OCI-LY7 (cell line): ENCODE measurements at regions of chr12 and their contacts with region 1.

Region 1: DNA sequence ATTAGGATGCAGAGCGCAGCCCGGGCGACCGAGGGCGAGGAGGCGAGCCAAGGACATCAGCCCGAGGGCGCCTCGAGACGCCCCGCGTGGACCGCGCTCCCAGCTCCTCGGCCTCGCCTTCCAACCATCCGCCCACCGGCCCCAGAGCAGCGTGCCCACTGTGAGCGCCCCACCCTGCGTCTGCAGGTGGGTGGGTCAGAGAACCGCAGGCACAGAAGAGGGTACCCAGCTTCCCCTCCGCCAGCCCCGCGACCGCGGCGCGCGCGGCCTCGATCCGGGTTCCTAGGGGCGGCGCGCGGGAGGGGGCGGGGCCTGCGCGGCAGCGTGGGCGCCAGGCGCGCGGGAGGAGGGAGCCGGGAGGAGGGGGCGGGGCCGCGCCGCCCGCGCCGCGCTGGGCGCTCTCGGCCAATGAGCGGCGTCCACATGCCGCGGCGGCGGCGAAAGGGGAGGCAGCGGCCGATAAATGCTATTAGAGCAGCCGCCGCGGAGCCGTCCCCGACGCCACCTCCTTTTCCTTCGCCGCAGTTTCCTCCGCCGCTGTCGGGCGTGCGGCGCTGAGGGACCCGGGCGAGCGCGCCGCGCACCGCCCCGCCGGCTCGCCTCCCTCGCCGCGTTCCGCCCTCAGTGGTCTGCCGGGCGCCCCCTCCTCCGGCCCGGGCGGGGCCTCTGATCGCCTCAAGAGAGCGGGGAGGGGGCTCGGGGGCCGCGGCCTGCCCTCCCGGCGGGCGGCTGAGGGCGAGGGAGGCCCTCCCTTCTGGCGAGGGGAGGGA is at the start of gene ATP2A2:
- DNase-seq: peak; percentile 95
- H3K4me3 ChIP-seq: peak within 1 kb of the TSS; percentile 86
- H3K27ac ChIP-seq: peak within 1 kb of the TSS; percentile 74
- H3K4me1 ChIP-seq: peaks cover 48% of the 10 kb centered on the region
- CTCF ChIP-seq: no peak
- total RNA-seq, gene ATP2A2: 84.1 and 93.5 TPM in 2 replicates

Region 2: DNA sequence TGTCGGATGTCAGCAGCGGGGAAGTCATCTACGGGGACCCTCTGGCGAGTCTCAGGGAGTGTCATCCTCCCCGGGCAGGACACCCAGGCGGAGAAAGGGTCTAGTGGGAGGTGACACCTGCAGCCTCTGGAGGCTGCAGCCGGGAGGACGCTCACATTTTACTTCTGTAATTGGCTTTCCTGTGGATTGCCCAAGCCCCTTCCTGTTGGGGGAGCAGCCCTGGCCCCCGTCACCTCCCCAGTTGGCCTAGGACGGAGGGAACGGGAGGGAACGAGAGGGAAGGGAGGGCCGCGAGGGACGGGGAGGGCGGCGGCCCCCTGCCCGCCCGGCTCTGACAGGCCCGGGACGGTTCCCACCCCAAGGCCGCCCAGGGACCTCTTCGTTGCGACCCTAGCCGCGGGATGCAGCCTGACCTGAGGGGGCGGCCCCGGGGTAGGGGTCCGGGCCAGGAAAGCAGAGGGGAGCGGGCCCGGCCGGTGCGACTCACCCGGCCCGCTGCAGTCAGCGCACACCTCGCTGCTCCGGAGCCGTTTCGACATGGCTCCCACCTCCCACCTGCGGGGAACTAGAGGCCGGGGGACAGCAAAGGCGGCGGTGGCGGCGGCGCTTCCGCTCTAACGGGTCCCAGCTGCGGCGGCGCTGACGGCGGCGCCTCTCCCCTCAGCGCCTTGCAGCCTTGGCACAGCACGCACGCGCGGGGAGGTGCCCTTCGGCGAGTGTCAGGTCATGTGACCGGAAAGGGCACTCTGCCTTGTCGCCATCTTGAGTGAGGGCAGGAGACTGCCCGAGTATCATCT is 285.1 kb before region 1 on chr12 and contains the start of gene GIT2:
- CTCF ChIA-PET with region 1: no interaction called
- POLR2A ChIA-PET with region 1: interaction called, 3 read pairs
- intact Hi-C with region 1: loop called (anchors 2 kb)
- DNase-seq: peak; percentile 99
- H3K4me3 ChIP-seq: peak within 1 kb of the TSS; percentile 96
- H3K27ac ChIP-seq: peak within 1 kb of the TSS; percentile 92
- H3K4me1 ChIP-seq: peaks cover 37% of the 10 kb centered on the region
- CTCF ChIP-seq: peak; percentile 35; the same call in 1 of the 2 replicates
- total RNA-seq, gene GIT2: 57.1 and 60.6 TPM in 2 replicates

Region 3: DNA sequence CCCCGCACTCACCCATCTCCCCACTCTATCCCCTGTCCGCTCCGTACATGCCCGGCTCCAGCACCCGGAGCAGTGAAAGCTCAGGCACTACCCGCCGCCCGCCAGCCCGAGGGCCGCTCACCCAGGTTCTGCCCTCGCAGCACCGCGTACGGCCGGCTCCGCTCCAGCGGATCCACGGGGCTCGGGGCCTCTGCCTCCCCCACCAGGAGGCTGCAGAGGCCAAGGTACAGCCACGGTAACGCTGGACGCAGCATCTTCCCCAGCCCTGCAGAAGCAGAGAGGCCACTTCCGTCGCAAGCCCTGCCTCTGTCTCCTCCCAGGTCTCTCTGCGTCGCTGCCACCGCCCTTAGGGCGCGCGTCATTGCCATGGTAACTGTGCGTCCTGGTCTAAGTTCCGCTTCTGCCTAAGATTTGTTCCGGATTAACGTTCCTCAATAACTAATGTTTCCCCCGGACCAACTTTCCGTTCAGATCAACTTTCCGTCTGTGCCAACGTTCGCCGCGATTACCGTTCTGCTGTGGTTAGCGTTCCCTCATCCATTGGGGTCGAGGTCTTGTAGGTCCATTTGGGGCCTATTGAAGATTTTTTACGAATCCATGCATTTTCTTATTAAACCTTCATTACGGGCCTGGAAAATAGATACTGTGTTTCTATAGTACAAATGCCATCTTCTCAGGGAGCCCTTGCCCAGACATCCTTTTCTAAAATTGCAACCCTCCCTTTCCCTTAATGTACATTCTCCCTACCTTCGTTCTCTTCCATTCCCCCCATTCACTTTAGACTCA is 232.5 kb before region 1 on chr12 and contains the start of gene C12orf76:
- CTCF ChIA-PET with region 1: no interaction called
- POLR2A ChIA-PET with region 1: no interaction called
- intact Hi-C with region 1: loop called (anchors 1 kb)
- DNase-seq: peak; percentile 97
- H3K4me3 ChIP-seq: peak within 1 kb of the TSS; percentile 90
- H3K27ac ChIP-seq: peak within 1 kb of the TSS; percentile 98
- H3K4me1 ChIP-seq: peaks cover 53% of the 10 kb centered on the region
- CTCF ChIP-seq: no peak
- total RNA-seq, gene C12orf76: 17.0 and 24.4 TPM in 2 replicates

Region 4: DNA sequence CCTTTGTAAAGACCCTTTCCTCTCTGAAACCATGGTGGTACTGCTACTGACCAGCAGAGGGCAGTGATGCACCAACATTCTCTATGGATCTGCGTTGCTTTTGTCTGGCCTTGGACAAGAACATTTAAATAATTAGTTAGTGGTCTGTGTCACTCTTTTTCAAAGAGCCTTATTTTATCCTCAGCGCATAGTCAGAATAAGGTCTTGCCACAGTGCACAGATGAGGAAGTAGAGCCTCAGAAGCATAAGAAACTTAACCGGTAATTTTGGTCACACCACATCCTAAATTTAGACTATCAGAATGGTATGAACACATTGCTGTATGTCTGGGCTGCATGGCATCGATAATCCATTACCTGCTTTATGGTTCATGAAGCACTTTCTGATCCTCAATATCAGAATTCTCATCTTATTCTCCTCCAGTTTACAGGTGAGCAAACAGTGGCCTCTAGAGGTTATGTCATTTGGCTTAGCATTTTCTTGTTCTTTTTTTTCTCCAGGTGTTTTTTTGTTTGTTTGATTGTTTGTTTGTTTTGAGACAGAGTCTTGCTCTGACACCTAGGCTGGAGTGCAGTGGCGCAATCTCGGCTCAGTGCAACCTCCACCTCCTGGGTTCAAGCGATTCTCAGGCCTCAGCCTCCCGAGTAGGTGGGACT is 180.5 kb before region 1 on chr12:
- CTCF ChIA-PET with region 1: interaction called, 3 read pairs
- POLR2A ChIA-PET with region 1: interaction called, 3 read pairs
- intact Hi-C with region 1: loop called (anchors 2 kb)
- DNase-seq: peak; percentile 87
- H3K4me3 ChIP-seq: peak overlapping the region; percentile 48
- H3K27ac ChIP-seq: peak overlapping the region; percentile 78
- H3K4me1 ChIP-seq: peaks cover 22% of the 10 kb centered on the region
- CTCF ChIP-seq: peak; percentile 97

Region 5: GRCh38 chr12:110124184-110124995 is 156.6 kb before region 1 on chr12 and contains the start of gene IFT81:
- CTCF ChIA-PET with region 1: no interaction called
- POLR2A ChIA-PET with region 1: interaction called, 4 read pairs
- intact Hi-C with region 1: loop called (anchors 2 kb)
- DNase-seq: peak; percentile 94
- H3K4me3 ChIP-seq: peak within 1 kb of the TSS; percentile 94
- H3K27ac ChIP-seq: peak within 1 kb of the TSS; percentile 19
- H3K4me1 ChIP-seq: peaks cover 14% of the 10 kb centered on the region
- CTCF ChIP-seq: no peak
- total RNA-seq, gene IFT81: 5.6 and 7.2 TPM in 2 replicates

Region 6: DNA sequence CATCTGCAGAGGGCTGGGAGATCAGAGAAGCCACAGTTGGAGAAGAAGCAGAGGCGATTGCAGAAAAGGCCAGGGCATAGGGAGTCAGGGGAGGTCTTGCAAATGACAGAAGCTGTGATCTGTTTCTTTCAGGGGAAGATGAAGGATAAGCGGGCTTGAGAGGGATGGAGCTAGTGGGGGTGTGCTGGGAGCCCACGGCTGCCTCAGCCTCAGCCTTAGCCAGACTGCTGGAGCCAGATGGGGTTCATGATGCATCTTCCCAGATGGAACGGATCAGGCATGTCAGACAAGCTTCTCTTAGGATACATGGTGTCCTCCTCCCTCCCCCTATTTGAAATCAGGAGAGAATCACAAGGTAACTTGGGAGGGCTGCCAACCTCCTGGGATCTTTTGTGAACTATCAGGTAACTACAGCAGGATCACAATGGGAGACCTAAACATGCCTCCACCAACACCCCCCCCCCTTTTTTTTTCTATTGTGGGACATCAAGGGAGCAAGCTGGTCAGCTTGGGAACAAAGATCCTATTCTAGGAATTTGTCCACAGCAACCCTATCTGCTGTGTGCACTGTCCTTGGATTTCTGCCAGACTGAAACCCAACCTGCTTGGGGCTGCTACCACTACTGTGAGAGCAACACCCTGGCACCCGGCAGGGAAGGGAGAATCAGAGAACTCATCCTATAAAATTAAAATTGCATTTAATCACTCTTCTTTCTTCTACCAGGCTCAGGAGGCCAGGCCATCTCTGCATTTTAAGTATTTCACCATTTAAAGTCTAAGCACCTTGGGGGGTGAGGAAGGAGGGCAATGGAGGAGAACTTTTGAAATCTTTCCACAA is 10.6 kb before region 1 on chr12:
- CTCF ChIA-PET with region 1: no interaction called
- POLR2A ChIA-PET with region 1: interaction called, 12 read pairs
- intact Hi-C with region 1: no loop called
- DNase-seq: no peak
- H3K4me3 ChIP-seq: no peak overlapping the region
- H3K27ac ChIP-seq: no peak overlapping the region
- H3K4me1 ChIP-seq: no peaks in the 10 kb centered on the region
- CTCF ChIP-seq: no peak

Region 7: DNA sequence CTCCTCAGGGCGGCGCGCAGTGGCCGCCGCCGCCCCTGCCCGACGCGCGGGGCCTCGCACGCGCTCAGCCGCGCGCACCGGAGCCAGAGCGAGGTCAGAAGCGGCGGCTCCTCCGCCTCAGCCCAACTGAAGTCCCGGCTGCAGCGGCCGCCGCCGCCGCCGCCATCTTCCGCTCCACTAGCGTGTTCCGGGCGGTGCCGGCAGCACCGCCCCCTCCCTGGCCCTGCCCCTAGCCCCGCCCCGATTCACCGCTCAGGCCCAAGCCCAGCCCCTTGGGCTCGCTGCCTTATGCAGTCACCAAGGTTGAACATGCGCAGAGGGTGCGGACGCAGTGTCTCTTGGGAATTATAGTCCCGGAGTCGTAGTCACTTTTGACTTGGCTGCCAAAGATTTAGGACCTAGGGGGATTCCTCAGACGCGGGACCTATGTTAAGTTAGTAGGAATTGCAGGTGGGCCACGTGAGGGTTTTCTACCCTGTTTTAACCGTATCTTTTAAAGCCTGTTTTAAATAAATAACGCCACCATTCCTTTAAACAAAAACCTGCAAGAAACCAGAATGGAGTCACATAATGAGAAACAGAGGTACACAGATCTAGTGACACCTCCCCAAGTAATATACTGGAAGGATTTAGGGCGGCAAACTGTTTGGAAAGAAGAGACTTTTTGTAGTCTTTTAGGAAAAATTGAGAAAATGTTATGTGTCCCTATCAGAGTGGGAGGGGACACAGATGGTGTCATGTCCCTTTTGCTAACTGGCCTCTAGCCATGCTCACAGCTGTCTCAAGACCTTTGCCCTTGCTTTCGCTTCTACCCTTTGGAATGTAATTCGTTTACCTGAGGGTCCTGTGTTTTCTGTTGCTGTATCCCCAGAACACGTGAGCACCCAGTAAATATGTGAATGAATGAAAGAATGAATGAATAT is 302.4 kb after region 1 on chr12 and contains the start of gene PPTC7:
- CTCF ChIA-PET with region 1: no interaction called
- POLR2A ChIA-PET with region 1: no interaction called
- intact Hi-C with region 1: loop called (anchors 10 kb)
- DNase-seq: peak; percentile 99
- H3K4me3 ChIP-seq: peak within 1 kb of the TSS; percentile 86
- H3K27ac ChIP-seq: peak within 1 kb of the TSS; percentile 57
- H3K4me1 ChIP-seq: peaks cover 57% of the 10 kb centered on the region
- CTCF ChIP-seq: no peak
- total RNA-seq, gene PPTC7: 8.3 and 11.4 TPM in 2 replicates

Region 8: DNA sequence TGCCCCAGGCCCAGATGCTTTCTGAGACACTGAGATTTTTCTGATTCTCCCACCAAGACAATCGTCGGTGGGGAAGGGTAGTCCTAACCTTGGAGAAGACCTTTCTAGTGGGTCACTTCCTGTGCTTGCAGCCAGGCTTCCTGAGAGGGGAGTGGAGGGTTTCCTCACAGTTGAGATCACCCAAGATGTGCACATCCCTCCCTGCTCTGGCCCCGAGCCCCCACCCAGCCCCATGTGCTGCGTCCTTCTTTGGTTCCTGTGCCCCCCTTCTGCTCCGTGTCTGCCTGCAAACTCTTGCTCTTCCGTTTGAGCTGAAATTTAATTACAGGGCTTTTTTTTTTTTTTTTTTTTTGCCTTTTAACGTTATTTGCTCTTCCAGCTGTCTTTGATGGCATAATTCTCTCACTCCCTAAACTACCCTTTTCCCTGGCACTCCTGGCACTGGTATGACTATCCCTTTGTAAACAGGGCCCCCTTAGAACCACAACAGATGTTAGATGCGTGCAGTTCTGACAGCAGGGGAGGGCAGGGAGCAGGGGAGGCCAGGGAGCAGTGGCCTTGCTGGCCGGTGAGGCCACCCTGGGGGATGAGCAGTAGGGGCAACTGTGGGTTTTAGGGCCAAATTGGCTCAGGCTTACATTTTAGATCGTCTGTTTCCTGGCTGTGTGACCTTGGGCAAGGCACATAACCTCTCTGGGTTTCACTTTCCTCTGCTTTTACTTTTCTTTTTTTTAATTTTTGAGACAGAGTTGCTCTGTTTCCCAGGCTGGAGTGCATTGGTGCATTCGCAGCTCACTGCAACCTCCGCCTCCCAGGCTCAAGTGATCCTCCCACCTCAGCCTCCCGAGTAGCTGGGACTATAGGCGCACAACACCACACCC is 943.5 kb after region 1 on chr12:
- CTCF ChIA-PET with region 1: no interaction called
- POLR2A ChIA-PET with region 1: no interaction called
- intact Hi-C with region 1: no loop called
- DNase-seq: peak; percentile 5
- H3K4me3 ChIP-seq: no peak overlapping the region
- H3K27ac ChIP-seq: no peak overlapping the region
- H3K4me1 ChIP-seq: no peaks in the 10 kb centered on the region
- CTCF ChIP-seq: no peak